CD4-positive, alpha-beta memory T cell (primary cell): ENCODE measurements at regions of chr18 and their contacts with region 1.

Region 1: GRCh38 chr18:12376718-12377555 is at the start of gene AFG3L2:
- DNase-seq: peak; percentile 100
- H3K4me3 ChIP-seq: peak within 1 kb of the TSS; percentile 73 to 88
- H3K4me3 Mint-ChIP-seq: peak within 1 kb of the TSS; percentile 88 to 94 (median 92)
- H3K27ac ChIP-seq: peak within 1 kb of the TSS; percentile 98
- H3K27ac Mint-ChIP-seq: peak within 1 kb of the TSS; percentile 90 to 97 (median 93)
- H3K4me1 ChIP-seq: peaks cover 43% of the 10 kb centered on the region
- H3K4me1 Mint-ChIP-seq: peaks cover 27 to 54% (median 42%) of the 10 kb centered on the region in 4 donors
- H3K27me3 ChIP-seq: no peaks in the 10 kb centered on the region
- H3K27me3 Mint-ChIP-seq: no peaks in the 10 kb centered on the region
- total RNA-seq, gene AFG3L2: 31.4 to 33.1 TPM

Region 2: DNA sequence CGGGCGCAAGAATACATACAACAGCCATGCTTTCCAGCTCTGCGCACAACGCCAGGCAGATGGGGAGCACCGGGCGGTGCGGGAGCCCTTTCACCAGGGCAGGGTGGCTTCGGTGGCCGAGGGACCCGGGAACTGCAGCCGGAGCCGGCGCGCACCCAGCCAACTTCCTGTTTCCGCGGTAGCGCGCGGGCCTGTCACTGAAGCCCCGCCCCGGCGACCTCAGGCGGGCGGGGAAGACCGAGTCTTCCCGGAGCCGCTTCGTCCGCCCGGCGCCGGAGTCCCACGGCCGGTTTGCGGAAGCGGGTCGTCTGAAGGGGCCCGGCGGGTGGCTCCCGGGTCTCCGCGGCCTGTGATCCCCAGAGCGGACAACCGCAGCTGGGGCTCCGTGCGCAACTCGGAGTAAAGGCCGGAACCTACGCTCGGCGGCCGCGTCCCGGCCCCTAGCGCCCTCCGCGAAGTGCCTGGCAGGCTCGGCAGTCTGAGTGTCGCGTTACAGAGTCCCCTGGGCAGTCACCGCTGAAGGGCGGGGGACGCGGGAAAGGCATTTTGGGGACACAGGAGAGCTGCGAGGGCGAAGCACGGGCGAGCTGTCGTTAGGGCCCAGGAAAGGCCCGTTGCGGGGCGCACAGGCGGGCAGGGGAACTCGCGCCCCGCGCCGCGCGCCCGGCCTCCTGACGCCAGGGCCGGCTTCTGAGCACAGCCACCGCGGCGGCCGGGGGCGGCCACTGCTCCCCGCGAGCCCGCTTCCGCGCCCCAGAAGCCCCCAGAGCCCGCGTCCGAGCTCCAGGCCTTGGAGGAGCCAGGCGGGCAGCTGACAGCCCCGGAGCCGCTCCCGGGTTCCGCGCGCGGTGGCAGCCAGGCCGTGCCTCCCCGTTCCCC is 468.5 kb before region 1 on chr18 and contains the start of gene MPPE1:
- CTCF ChIA-PET with region 1: no interaction called
- POLR2A ChIA-PET with region 1: interaction called, 3 read pairs
- intact Hi-C with region 1: loop called (anchors 1 kb)
- DNase-seq: peak; percentile 82 to 87 (median 83)
- H3K4me3 ChIP-seq: peak within 1 kb of the TSS; percentile 86 to 93
- H3K4me3 Mint-ChIP-seq: peak within 1 kb of the TSS; percentile 94 to 96 (median 96)
- H3K27ac ChIP-seq: peak within 1 kb of the TSS; percentile 93
- H3K27ac Mint-ChIP-seq: peak within 1 kb of the TSS; percentile 89 to 98 (median 96)
- H3K4me1 ChIP-seq: peaks cover 20% of the 10 kb centered on the region
- H3K4me1 Mint-ChIP-seq: peaks cover 11 to 37% (median 21%) of the 10 kb centered on the region in 4 donors
- H3K27me3 ChIP-seq: no peaks in the 10 kb centered on the region
- H3K27me3 Mint-ChIP-seq: no peaks in the 10 kb centered on the region
- total RNA-seq, gene MPPE1: 75.3 to 79.7 TPM

Region 3: GRCh38 chr18:12408247-12408869 is 31.4 kb after region 1 on chr18:
- CTCF ChIA-PET with region 1: interaction called, 3 read pairs
- POLR2A ChIA-PET with region 1: interaction called, 24 read pairs
- intact Hi-C with region 1: loop called (anchors 1 kb)
- DNase-seq: peak in 1 of 5 donors; percentile 6
- H3K4me3 ChIP-seq: no peak overlapping the region
- H3K4me3 Mint-ChIP-seq: peak overlapping the region; percentile 58 to 75 (median 68)
- H3K27ac ChIP-seq: no peak overlapping the region
- H3K27ac Mint-ChIP-seq: peak overlapping the region in 3 of 7 donors; percentile 31 to 79 (median 35)
- H3K4me1 ChIP-seq: peaks cover 18% of the 10 kb centered on the region
- H3K4me1 Mint-ChIP-seq: peaks cover 12 to 38% (median 19%) of the 10 kb centered on the region in 4 donors
- H3K27me3 ChIP-seq: no peaks in the 10 kb centered on the region
- H3K27me3 Mint-ChIP-seq: peaks cover 11 to 15% of the 10 kb centered on the region in 2 donors

Region 4: GRCh38 chr18:12883684-12884405 is 506.9 kb after region 1 on chr18 and contains the start of gene PTPN2:
- CTCF ChIA-PET with region 1: no interaction called
- POLR2A ChIA-PET with region 1: interaction called, 13 read pairs
- intact Hi-C with region 1: loop called (anchors 1 kb)
- DNase-seq: peak; percentile 94 to 96 (median 95)
- H3K4me3 ChIP-seq: peak within 1 kb of the TSS; percentile 54 to 81
- H3K4me3 Mint-ChIP-seq: peak within 1 kb of the TSS; percentile 94 to 98 (median 96)
- H3K27ac ChIP-seq: peak within 1 kb of the TSS; percentile 100
- H3K27ac Mint-ChIP-seq: peak within 1 kb of the TSS; percentile 97 to 99 (median 98)
- H3K4me1 ChIP-seq: peaks cover 58% of the 10 kb centered on the region
- H3K4me1 Mint-ChIP-seq: peaks cover 50 to 63% (median 54%) of the 10 kb centered on the region in 4 donors
- H3K27me3 ChIP-seq: no peaks in the 10 kb centered on the region
- H3K27me3 Mint-ChIP-seq: no peaks in the 10 kb centered on the region
- total RNA-seq, gene PTPN2: 65.5 to 69.2 TPM

Region 5: DNA sequence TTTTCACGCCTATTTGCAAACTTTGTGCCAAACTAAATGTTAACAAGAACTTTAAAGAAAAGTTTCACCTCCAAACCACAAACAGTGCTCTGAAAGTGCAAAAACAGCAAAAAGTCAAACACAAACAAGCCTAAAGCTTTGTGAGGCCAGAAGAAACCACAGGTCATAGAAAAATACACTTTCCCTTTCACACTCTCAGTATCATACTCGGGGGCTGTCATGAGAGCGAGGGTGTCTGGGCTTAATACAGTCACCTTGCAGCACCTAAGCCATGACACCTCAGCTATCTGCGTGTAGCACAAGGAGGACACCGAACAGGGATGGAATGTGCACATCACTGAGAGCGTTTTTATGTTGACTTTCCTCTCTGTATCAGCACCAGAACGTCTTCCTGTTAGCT is 544.2 kb after region 1 on chr18:
- CTCF ChIA-PET with region 1: no interaction called
- POLR2A ChIA-PET with region 1: no interaction called
- intact Hi-C with region 1: no loop called
- DNase-seq: peak; percentile 22 to 50 (median 42)
- H3K4me3 ChIP-seq: peak overlapping the region in 1 of 2 donors; percentile 17
- H3K4me3 Mint-ChIP-seq: peak overlapping the region; percentile 60 to 75 (median 71)
- H3K27ac ChIP-seq: no peak overlapping the region
- H3K27ac Mint-ChIP-seq: peak overlapping the region; percentile 44 to 85 (median 62)
- H3K4me1 ChIP-seq: peaks cover 17% of the 10 kb centered on the region
- H3K4me1 Mint-ChIP-seq: peaks cover 13 to 24% (median 19%) of the 10 kb centered on the region in 4 donors
- H3K27me3 ChIP-seq: no peaks in the 10 kb centered on the region
- H3K27me3 Mint-ChIP-seq: no peaks in the 10 kb centered on the region

Region 6: GRCh38 chr18:13137670-13138419 is 760.9 kb after region 1 on chr18:
- CTCF ChIA-PET with region 1: no interaction called
- POLR2A ChIA-PET with region 1: interaction called, 9 read pairs
- intact Hi-C with region 1: loop called (anchors 5 kb)
- DNase-seq: peak; percentile 77 to 86 (median 81)
- H3K4me3 ChIP-seq: peak overlapping the region; percentile 69 to 92
- H3K4me3 Mint-ChIP-seq: peak overlapping the region; percentile 90 to 100 (median 97)
- H3K27ac ChIP-seq: peak overlapping the region; percentile 54
- H3K27ac Mint-ChIP-seq: peak overlapping the region; percentile 93 to 99 (median 96)
- H3K4me1 ChIP-seq: peaks cover 19% of the 10 kb centered on the region
- H3K4me1 Mint-ChIP-seq: peaks cover 19 to 29% (median 24%) of the 10 kb centered on the region in 4 donors
- H3K27me3 ChIP-seq: no peaks in the 10 kb centered on the region
- H3K27me3 Mint-ChIP-seq: no peaks in the 10 kb centered on the region